Right ventricle myocardium superior (tissue), 1 donor: ENCODE measurements at regions of chr22 and their contacts with region 1.

Region 1: DNA sequence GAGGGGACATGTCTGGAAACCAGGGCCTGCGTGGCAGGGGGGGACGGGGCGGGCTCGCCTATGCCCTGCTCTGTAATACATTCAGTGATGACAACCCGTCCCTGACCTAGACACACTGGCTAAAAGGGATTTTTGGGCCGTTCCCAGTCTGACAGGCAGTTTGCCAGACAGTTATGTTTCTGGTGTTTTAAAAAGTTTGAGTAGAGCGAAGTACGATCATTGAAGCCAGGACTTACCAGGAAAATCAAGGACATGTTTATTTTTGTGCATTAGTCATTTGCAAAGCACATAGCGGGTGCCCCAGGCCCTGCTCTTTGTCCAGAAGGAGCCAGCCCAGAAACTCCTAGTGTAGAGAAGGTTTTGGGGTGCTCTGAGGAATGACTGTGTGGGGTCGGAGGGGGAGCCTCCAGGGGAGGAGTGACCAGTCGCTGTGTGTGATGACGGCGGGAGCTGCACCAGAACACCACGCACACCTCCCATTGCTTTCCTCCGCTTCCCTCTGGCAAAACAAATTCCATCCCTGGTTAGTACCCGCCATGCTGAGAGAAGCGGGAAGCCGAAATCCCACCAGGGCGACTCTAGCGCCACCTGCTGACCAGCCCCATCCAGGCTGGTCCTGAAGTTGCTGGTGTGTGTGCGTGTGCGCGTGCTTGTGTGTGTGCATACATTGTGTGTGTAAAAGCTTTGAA is 50.8 kb downstream of the FBLN1 start:
- DNase-seq: peak; percentile 85
- ATAC-seq: peak; percentile 69

Region 2: GRCh38 chr22:45309472-45310227 is 243.8 kb before region 1 on chr22 and contains the start of gene FAM118A:
- intact Hi-C with region 1: no loop called
- DNase-seq: peak; percentile 95
- ATAC-seq: peak; percentile 97
- total RNA-seq, gene FAM118A: 21.1 TPM

Region 3: GRCh38 chr22:45441138-45441537 is 112.4 kb before region 1 on chr22:
- intact Hi-C with region 1: loop called (anchors 2 kb)
- DNase-seq: peak; percentile 76
- ATAC-seq: peak; percentile 96

Region 4: GRCh38 chr22:45629469-45630089 is 76.1 kb after region 1 on chr22:
- intact Hi-C with region 1: no loop called
- DNase-seq: no peak
- ATAC-seq: no peak